Posterior cingulate gyrus (tissue), 11 donors: ENCODE measurements at regions of chr5 and their contacts with region 1.

Region 1: GRCh38 chr5:8756498-8757084 is 789.3 kb downstream of the SEMA5A start:
- DNase-seq: peak in 5 of 10 donors; percentile 13 to 60 (median 41)

Region 2: GRCh38 chr5:8710426-8710930 is 46.1 kb before region 1 on chr5:
- intact Hi-C with region 1: no loop called
- DNase-seq: no peak

Region 3: GRCh38 chr5:8842971-8843551 is 86.5 kb after region 1 on chr5:
- intact Hi-C with region 1: loop called (anchors 1 kb)
- DNase-seq: peak in 8 of 10 donors; percentile 57 to 95 (median 69)